ENCODE measurements at regions of chr14 and their contacts with region 1.

Region 1: GRCh38 chr14:69398053-69398817 is at the starts of genes ERH and SLC39A9:
- DNase-seq: peak; percentile 96
- H3K4me3 ChIP-seq: peak within 1 kb of the TSS; percentile 79 to 86
- H3K27ac ChIP-seq: peak within 1 kb of the TSS; percentile 87 to 91
- H3K4me1 ChIP-seq: peaks cover 7% of the 10 kb centered on the region
- H3K27me3 ChIP-seq: no peaks in the 10 kb centered on the region
- CTCF ChIP-seq: peak in 1 of 4 experiments; percentile 11
- POLR2A ChIP-seq: peak; percentile 9
- total RNA-seq, gene ERH: 68.5 to 111 TPM
- total RNA-seq, gene SLC39A9: 71.5 to 102 TPM

Region 2: DNA sequence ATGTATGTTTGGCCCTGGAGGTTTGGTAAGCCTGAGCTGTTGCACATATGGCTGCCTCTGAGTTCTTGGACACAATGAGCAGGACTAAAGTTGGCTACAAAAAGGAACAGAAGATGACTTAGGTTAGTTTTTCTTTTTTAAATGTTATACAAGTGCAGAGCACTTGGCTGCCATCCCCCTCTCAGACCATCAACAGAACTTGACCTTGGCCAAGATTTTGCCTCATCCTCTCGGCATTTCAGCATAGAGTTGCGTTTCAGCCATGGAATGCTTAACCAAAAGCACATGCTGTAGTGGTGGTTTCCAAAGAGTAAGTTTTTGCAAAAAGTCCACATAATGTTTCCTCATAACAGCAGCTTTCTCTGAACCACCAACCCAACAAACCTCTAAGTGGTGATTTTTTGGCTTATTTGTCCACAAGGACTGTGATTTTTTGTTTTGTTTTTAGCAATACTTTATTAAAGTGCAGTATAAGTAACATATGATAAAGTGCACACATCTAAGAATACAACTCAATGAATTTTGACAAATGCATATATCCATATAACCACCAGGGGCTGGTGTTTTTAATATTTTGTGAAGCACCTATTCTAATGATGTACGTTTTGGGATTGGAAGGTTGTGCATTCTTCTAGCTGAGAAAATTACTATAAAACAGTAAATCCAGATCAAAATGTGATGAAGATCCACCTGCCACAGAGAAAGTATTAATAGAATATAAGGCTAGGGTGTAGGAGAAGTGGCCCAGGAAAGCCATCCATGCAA is 150.4 kb before region 1 on chr14:
- intact Hi-C with region 1: loop called (anchors 1 kb)
- DNase-seq: no peak
- H3K4me3 ChIP-seq: no peak overlapping the region
- H3K27ac ChIP-seq: peak overlapping the region in 1 of 2 donors; percentile 9
- H3K4me1 ChIP-seq: no peaks in the 10 kb centered on the region
- H3K27me3 ChIP-seq: no peaks in the 10 kb centered on the region
- CTCF ChIP-seq: no peak
- POLR2A ChIP-seq: no peak